Heart left ventricle (tissue), 16 donors: ENCODE measurements at regions of chr11 and their contacts with region 1.

Region 1: GRCh38 chr11:114059278-114059983 is at the start of gene ZBTB16:
- DNase-seq: peak; percentile 89 to 95 (median 92)
- ATAC-seq: peak; percentile 66 to 82 (median 76)
- H3K4me3 ChIP-seq: peak within 1 kb of the TSS; percentile 60 to 99 (median 80)
- H3K27ac ChIP-seq: peak within 1 kb of the TSS; percentile 79 to 100 (median 98)
- H3K4me1 ChIP-seq: peaks cover 14 to 64% (median 48%) of the 10 kb centered on the region in 12 donors
- H3K27me3 ChIP-seq: peaks cover 0 to 13% (median 0%) of the 10 kb centered on the region in 9 donors
- CTCF ChIP-seq: peak in 11 of 12 donors; percentile 10 to 87 (median 42)
- POLR2A ChIP-seq: peak; percentile 92 to 98
- total RNA-seq, gene ZBTB16: 15.3 to 130 (median 62.8) TPM

Region 2: DNA sequence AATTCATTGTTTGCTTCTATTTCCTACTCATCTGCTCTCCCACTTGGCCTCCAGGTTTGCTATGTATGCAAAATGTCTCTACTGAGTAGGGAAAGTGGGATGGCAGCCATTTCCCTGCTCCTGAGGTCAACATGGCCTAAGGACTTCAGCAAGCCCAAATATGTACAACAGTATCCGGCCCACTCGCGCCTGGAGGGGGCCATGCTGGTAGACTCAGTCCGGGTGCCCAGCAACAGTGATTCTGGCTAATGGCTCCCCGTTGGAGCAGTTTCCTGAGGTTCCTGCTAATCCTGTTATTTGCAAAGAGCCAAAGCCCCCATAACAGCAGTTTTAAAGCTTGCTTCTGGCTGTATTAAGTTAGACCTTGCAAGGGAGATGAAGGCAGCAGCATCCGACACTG is 1351.8 kb before region 1 on chr11:
- intact Hi-C with region 1: no loop called
- DNase-seq: no peak
- ATAC-seq: no peak
- H3K4me3 ChIP-seq: no peak overlapping the region
- H3K27ac ChIP-seq: no peak overlapping the region
- H3K4me1 ChIP-seq: no peaks in the 10 kb centered on the region
- H3K27me3 ChIP-seq: peaks cover 0 to 3% (median 0%) of the 10 kb centered on the region in 9 donors
- CTCF ChIP-seq: no peak
- POLR2A ChIP-seq: no peak

Region 3: GRCh38 chr11:114075891-114076441 is 16.5 kb after region 1 on chr11:
- intact Hi-C with region 1: loop called in 1 of 10 experiments (anchors 2 kb)
- DNase-seq: peak in 4 of 5 donors; percentile 46 to 56 (median 52)
- ATAC-seq: peak in 2 of 4 donors; percentile 1 to 2
- H3K4me3 ChIP-seq: peak overlapping the region in 8 of 12 donors; percentile 8 to 29 (median 18)
- H3K27ac ChIP-seq: peak overlapping the region in 10 of 12 donors; percentile 1 to 92 (median 81)
- H3K4me1 ChIP-seq: peaks cover 34 to 100% (median 97%) of the 10 kb centered on the region in 12 donors
- H3K27me3 ChIP-seq: no peaks in the 10 kb centered on the region
- CTCF ChIP-seq: peak; percentile 46 to 74 (median 59)
- POLR2A ChIP-seq: peak in 1 of 2 donors; percentile 8

Region 4: DNA sequence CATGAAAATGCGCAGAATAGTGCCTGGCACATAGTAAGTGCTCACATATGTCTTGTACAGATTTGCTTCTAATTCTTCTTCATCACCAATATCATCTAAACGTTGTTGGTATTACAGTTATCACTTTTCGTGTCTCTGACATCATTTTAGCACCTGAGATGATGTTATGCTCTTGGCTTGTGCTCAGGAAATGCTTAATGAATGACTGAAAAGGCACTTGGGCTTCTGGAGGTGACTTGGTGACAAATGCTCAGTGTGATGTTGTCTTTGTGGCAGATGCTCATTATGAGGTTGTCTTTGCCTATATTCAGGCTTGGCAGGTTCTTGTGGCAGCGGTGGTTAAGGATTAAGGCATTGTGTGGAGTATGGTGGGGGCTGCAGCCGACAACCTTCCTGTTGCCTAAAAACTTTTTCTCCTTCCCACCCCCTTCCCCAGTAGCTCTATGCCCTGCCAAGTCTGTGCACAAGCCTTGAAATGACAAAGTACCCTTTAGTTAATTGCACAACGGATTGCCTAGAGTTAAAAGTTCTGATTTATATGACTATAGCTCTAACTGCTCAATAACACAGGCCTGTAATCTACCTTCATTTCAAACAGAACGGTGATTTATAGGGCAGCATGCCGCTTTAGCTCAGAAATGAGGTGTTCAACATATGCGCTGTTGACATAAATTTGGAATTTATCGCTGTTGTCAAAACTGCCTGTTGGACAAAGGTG is 82.6 kb after region 1 on chr11:
- intact Hi-C with region 1: loop called in 1 of 10 experiments (anchors 5 kb)
- DNase-seq: no peak
- ATAC-seq: no peak
- H3K4me3 ChIP-seq: no peak overlapping the region
- H3K27ac ChIP-seq: peak overlapping the region in 5 of 12 donors; percentile 16 to 60 (median 26)
- H3K4me1 ChIP-seq: peaks cover 45 to 100% (median 83%) of the 10 kb centered on the region in 12 donors
- H3K27me3 ChIP-seq: no peaks in the 10 kb centered on the region
- CTCF ChIP-seq: no peak
- POLR2A ChIP-seq: no peak

Region 5: GRCh38 chr11:114166897-114167323 is 107.5 kb after region 1 on chr11:
- intact Hi-C with region 1: loop called in 4 of 10 experiments (anchors 5 kb)
- DNase-seq: no peak
- ATAC-seq: peak in 3 of 4 donors; percentile 1 to 3 (median 3)
- H3K4me3 ChIP-seq: peak overlapping the region in 3 of 12 donors; percentile 5 to 31 (median 8)
- H3K27ac ChIP-seq: peak overlapping the region; percentile 80 to 100 (median 98)
- H3K4me1 ChIP-seq: peaks cover 68 to 100% (median 94%) of the 10 kb centered on the region in 12 donors
- H3K27me3 ChIP-seq: no peaks in the 10 kb centered on the region
- CTCF ChIP-seq: no peak
- POLR2A ChIP-seq: peak in 1 of 2 donors; percentile 46

Region 6: GRCh38 chr11:114262681-114263512 is 203.5 kb after region 1 on chr11:
- intact Hi-C with region 1: loop called in 8 of 10 experiments (anchors 1 to 5 kb)
- DNase-seq: peak in 2 of 5 donors; percentile 33 to 41
- ATAC-seq: peak in 3 of 4 donors; percentile 42 to 51 (median 47)
- H3K4me3 ChIP-seq: no peak overlapping the region
- H3K27ac ChIP-seq: no peak overlapping the region
- H3K4me1 ChIP-seq: peaks cover 0 to 47% (median 32%) of the 10 kb centered on the region in 12 donors
- H3K27me3 ChIP-seq: no peaks in the 10 kb centered on the region
- CTCF ChIP-seq: peak; percentile 42 to 89 (median 73)
- POLR2A ChIP-seq: no peak

Region 7: GRCh38 chr11:114664641-114665040 is 605.2 kb after region 1 on chr11:
- intact Hi-C with region 1: no loop called
- DNase-seq: no peak
- ATAC-seq: no peak
- H3K4me3 ChIP-seq: no peak overlapping the region
- H3K27ac ChIP-seq: no peak overlapping the region
- H3K4me1 ChIP-seq: no peaks in the 10 kb centered on the region
- H3K27me3 ChIP-seq: no peaks in the 10 kb centered on the region
- CTCF ChIP-seq: no peak
- POLR2A ChIP-seq: no peak